Right lobe of liver (tissue), 6 donors: ENCODE measurements at regions of chr1 and their contacts with region 1.

Region 1: DNA sequence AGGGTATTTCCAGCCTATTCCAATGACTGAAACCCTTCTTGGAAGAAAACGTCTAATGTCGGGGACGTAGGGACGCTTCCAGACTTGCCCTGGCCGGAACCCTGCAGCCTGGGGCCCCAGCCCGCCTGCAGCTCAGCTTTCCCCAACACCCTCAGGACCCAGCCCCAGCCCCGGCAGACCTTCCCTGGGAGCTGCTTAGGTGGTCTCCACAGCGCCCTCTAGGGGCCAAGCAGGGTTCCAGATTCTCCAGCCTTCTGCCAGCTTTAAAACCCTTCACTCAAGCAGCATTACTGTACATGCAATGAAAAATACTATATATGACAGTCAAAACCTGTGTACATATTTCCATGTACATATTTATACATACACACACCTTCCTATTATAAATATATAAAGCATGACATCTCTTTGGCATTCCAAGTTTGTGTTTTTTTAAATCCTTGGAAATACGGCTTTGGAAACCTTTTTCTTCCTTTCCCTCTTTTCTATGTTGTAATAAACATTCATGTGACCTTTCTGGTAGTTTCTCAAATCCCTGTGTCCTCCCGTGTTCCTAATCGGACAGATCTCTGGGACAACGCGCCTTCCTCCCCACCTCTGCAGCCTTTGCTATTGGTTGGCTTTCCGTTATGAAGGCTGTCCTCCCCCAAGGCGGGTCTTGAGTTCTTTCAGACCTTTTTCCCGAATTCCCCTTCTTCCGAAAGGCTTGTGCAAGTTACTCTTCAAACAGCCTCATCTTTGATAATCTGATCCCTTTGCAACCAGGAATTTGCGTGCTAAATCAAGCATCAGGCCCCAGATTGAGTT is 60.3 kb downstream of the STUM start:
- DNase-seq: peak; percentile 63 to 68 (median 65)
- ATAC-seq: peak; percentile 77 to 91 (median 84)
- H3K4me3 ChIP-seq: no peak overlapping the region
- H3K27ac ChIP-seq: no peak overlapping the region
- H3K4me1 ChIP-seq: no peaks in the 10 kb centered on the region
- H3K27me3 ChIP-seq: no peaks in the 10 kb centered on the region
- CTCF ChIP-seq: peak; percentile 60 to 90 (median 85)
- POLR2A ChIP-seq: no peak

Region 2: DNA sequence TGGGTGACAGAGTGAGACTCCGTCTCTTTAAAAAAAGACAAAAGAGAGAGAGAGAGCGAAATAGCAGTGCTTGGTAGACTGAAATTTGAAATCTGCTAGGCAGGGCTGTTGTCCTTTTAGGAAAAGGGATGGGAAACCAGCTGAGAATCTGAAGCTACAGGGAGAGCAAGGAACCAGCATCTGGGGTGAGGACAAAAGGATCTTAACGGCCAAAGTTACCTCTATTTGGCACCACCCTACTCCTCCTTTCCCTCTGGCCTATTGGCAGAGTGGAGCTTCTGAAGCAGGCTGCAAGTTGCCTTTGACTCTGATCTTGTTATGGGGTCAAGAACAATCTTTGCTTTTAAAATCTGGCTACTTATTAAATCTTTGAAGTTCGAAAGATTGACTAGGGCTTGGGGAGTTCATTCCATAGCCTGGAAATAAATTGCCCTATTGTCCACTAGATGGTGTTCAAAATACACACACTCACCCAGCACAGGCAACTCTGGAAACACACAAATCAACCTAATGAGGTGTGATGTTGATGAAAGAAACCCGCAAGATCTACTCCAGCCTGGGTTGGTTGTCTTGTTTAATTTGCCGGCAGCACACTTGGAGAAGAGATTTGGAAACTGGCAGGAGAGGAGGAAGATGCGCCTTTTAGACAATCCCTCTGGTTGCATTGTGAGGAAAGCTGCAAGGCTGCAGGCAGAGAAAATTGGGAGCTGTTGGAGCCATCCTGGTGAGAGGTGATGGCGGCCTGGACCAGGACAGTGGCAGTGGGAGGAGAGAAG is 184.5 kb before region 1 on chr1:
- intact Hi-C with region 1: loop called (anchors 10 kb)
- DNase-seq: no peak
- ATAC-seq: peak; percentile 58 to 82 (median 78)
- H3K4me3 ChIP-seq: no peak overlapping the region
- H3K27ac ChIP-seq: no peak overlapping the region
- H3K4me1 ChIP-seq: no peaks in the 10 kb centered on the region
- H3K27me3 ChIP-seq: no peaks in the 10 kb centered on the region
- CTCF ChIP-seq: peak; percentile 51 to 65 (median 61)
- POLR2A ChIP-seq: no peak

Region 3: GRCh38 chr1:226763905-226764264 is 155.0 kb after region 1 on chr1:
- intact Hi-C with region 1: no loop called
- DNase-seq: no peak
- ATAC-seq: peak; percentile 53 to 58 (median 56)
- H3K4me3 ChIP-seq: no peak overlapping the region
- H3K27ac ChIP-seq: no peak overlapping the region
- H3K4me1 ChIP-seq: no peaks in the 10 kb centered on the region
- H3K27me3 ChIP-seq: no peaks in the 10 kb centered on the region
- CTCF ChIP-seq: no peak
- POLR2A ChIP-seq: no peak